ENCODE measurements at regions of chr5 and their contacts with region 1.

Region 1: GRCh38 chr5:167802778-167803315 is 488.6 kb upstream of the WWC1 start:
- DNase-seq: no peak
- ATAC-seq: no peak
- H3K4me3 ChIP-seq: no peak overlapping the region
- H3K27ac ChIP-seq: no peak overlapping the region
- H3K4me1 ChIP-seq: no peaks in the 10 kb centered on the region
- H3K27me3 ChIP-seq: no peaks in the 10 kb centered on the region
- CTCF ChIP-seq: no peak

Region 2: DNA sequence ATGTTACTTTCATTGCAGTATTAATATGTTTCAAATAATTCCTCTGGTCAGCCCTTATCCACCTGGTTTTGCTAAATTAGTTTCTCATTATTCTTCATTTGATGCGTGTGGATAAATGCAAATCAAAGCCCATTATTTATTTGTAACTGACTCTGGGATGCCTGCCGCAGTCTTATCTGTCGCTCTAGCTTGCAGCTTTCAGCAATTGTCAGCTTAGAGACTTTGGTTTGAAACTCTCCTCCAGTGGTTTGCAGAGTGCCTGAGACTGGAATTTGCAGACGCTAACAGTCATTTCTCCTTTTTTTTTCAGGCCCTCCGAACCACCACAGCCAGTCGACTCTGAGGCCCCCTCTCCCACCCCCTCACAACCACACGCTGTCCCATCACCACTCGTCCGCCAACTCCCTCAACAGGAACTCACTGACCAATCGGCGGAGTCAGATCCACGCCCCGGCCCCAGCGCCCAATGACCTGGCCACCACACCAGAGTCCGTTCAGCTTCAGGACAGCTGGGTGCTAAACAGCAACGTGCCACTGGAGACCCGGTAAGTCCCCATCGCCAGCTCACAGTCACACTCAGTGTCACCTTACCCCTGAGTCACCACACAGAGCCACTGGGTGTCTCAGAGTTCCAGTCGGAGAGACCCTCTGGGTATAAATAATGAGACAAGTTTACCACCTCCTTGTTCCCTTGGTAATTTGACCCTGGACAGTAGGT is 149.6 kb after region 1 on chr5:
- CTCF ChIA-PET with region 1: no interaction called
- POLR2A ChIA-PET with region 1: interaction called, 11 read pairs
- in situ Hi-C with region 1: no loop called
- intact Hi-C with region 1: no loop called
- DNase-seq: no peak
- ATAC-seq: peak; percentile 92
- H3K4me3 ChIP-seq: peak overlapping the region; percentile 11 to 26
- H3K27ac ChIP-seq: no peak overlapping the region
- H3K4me1 ChIP-seq: peaks cover 9% of the 10 kb centered on the region
- H3K27me3 ChIP-seq: no peaks in the 10 kb centered on the region; the same call in none of the 2 replicates
- CTCF ChIP-seq: no peak